ENCODE measurements at regions of chr2 and their contacts with region 1.

Region 1: DNA sequence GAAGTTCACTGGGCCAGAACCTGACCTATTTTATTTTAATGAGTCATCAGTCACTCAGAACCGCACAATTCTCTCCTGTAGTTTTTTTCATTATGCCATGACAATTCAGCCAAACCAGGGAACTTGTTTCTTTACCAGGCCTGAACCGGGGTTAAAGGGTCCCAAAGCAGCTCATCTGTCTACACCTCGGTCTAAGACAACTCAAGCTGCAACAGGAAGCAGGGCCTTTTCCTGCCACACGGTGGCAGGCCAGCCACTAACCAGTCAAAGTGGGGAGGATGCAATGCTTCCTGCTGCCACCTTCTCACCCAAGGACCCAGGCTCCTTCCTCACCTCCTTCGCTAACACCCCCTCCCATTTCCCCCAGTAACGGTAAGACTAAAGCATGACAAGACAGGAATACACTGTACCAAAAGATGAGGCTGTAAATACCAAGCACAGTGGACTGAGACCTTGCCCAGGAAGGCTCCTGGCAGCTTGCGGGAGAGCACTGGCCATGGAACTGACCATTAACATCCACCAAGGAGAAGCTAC is 56.7 kb upstream of the ACKR3 start:
- DNase-seq: peak; percentile 50 to 74 (median 67)
- ATAC-seq: peak; percentile 45 to 94 (median 85)
- H3K4me3 ChIP-seq: no peak overlapping the region
- H3K27ac ChIP-seq: no peak overlapping the region
- H3K4me1 ChIP-seq: peaks cover 0 to 12% (median 2%) of the 10 kb centered on the region in 12 donors
- H3K27me3 ChIP-seq: peaks cover 0 to 6% (median 0%) of the 10 kb centered on the region in 9 donors
- CTCF ChIP-seq: peak; percentile 77 to 92 (median 84)
- POLR2A ChIP-seq: no peak

Region 2: GRCh38 chr2:236352761-236353593 is 160.0 kb before region 1 on chr2:
- intact Hi-C with region 1: loop called in 6 of 10 experiments (anchors 5 to 10 kb)
- DNase-seq: no peak
- ATAC-seq: peak in 1 of 4 donors; percentile 49
- H3K4me3 ChIP-seq: no peak overlapping the region
- H3K27ac ChIP-seq: no peak overlapping the region
- H3K4me1 ChIP-seq: no peaks in the 10 kb centered on the region
- H3K27me3 ChIP-seq: no peaks in the 10 kb centered on the region
- CTCF ChIP-seq: peak; percentile 75 to 88 (median 83)
- POLR2A ChIP-seq: no peak

Region 3: DNA sequence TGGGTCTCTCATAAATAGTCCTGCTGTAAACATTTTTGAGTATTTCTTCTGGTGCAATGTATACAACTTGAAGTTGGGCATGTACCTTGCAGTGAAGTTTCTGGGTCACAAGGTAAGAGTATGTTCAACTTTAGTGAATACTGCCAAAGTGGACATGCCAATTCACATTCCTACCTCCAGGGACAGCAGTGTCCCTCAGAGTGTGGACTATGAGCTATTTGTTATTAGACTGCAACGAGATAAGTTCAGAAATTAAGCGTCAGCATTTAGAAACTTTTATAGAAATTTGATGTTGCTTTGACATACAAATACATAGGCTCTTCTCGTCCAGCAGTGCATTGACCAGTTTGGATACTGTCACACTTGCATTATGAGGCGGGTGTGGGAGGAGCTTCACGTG is 49.5 kb after region 1 on chr2:
- intact Hi-C with region 1: loop called in 6 of 10 experiments (anchors 5 kb)
- DNase-seq: no peak
- ATAC-seq: no peak
- H3K4me3 ChIP-seq: no peak overlapping the region
- H3K27ac ChIP-seq: no peak overlapping the region
- H3K4me1 ChIP-seq: peaks cover 0 to 19% (median 8%) of the 10 kb centered on the region in 12 donors
- H3K27me3 ChIP-seq: no peaks in the 10 kb centered on the region
- CTCF ChIP-seq: peak; percentile 37 to 75 (median 64)
- POLR2A ChIP-seq: no peak

Region 4: DNA sequence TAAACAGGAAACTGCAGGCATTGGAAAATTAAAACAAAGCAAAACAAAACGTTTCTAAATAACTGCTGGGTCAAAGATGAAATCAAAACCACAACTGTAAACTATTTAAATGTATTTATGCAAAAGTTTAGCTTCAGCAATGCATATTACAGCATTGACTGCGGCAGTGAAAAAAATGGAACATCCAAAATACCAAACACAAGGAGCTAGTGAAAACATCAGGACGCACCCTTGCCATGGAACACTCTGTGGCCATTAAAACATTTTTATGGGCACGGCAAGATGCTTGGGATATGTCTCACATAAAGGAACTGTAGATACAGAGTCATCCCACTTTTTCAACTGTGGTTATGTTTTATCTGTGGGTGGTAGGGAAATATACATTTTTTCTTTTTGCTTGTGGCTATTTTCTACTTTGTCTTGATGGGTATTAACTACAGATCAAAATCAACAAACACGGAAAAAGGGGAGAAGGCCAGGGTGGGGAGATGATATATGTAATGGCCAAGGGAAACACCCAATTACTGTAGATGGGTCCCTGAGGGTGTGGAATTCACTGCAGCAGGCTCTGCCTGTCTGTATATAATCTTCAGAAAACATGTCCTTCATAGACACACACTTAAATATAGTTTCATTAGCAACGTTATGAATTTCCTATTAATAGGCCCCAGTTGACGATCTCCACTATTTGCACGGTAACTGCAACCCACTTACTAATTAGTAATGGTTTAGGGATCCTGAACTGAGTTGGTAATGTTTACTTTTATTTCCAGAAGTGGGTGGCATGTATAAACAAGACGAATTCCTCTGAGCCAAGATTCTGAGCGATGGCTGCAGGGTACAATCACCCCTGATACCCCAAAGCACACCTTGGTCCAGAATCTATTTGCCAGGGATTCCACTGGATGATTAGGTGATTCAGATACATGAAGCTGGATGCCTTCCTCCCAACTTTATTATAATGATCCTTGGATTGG is 167.2 kb after region 1 on chr2:
- intact Hi-C with region 1: loop called in 1 of 10 experiments (anchors 10 kb)
- DNase-seq: peak in 1 of 5 donors; percentile 1
- ATAC-seq: no peak
- H3K4me3 ChIP-seq: no peak overlapping the region
- H3K27ac ChIP-seq: no peak overlapping the region
- H3K4me1 ChIP-seq: peaks cover 0 to 34% (median 15%) of the 10 kb centered on the region in 12 donors
- H3K27me3 ChIP-seq: no peaks in the 10 kb centered on the region
- CTCF ChIP-seq: no peak
- POLR2A ChIP-seq: no peak

Region 5: DNA sequence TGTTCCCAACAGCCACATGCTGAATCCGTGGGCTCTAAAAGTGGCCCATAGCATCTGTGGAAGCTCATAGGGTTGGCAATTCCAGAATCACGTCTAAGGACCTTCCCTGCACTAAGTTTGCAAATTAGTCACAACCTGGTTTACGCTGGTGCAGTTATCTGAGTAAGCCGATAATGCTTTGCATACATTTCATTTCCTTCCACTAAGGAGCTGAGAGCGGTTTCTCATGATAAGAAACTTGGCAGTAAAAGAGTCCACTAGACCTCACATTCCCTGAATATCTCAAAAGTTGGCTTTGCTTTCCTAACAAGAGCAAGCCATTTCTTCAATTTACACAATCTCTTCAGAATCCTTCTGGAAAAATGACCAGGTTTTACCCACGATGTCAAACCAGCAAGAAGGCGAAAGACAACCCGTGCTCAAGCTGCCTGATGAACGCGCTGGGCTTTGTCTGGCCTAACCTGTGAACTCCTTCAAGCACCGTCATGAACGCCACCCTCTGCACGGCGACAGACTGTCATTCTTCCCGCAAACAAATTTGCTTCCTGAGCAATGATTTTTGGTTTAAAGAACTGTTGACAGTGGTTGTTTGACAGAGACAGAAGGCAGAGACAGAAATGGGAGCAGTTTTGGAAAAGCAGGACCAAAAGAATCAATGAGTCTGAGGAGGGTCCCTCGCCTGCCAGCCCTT is 499.8 kb after region 1 on chr2:
- intact Hi-C with region 1: loop called in 1 of 10 experiments (anchors 5 kb)
- DNase-seq: no peak
- ATAC-seq: peak in 1 of 4 donors; percentile 39
- H3K4me3 ChIP-seq: no peak overlapping the region
- H3K27ac ChIP-seq: no peak overlapping the region
- H3K4me1 ChIP-seq: peaks cover 0 to 10% (median 0%) of the 10 kb centered on the region in 12 donors
- H3K27me3 ChIP-seq: no peaks in the 10 kb centered on the region
- CTCF ChIP-seq: no peak
- POLR2A ChIP-seq: no peak

Region 6: DNA sequence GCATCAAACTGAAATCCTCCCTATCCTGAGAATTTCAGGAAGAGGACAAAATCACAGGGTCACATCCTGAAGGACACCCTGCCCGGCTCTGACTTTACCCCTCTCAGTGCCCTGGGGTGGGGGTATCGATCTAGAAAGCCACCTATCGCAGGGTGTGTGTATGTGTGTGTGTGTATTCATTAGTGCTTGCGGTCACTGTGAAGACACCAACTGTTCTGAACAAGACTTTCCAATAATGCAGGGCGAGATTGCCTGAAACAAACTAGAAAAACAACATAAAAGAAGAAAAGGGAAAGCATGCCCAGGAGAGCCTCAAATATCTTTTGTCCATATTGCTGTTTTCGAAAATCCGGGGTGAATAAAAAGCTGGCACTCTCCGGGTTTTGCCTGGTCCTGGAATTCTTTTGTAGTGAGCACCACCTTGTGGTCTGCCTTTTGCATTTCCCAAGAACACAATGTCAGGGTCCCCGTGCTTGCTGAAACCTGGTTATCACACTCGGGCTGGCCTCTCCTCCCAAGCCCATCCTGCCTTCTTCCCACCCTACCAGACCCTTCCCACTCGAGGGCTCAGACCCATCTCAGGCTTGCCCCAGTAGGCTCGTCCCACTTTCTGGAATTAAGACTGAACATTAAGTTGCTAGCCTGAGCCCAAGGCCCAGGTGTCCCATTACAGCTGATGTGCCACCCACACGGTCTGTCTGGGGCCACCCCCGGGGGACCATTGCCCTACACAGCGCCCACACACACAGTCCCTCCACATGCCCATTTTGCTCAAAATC is 547.8 kb after region 1 on chr2:
- intact Hi-C with region 1: loop called in 5 of 10 experiments (anchors 2 to 10 kb)
- DNase-seq: peak in 3 of 5 donors; percentile 38 to 54 (median 51)
- ATAC-seq: peak; percentile 49 to 81 (median 72)
- H3K4me3 ChIP-seq: no peak overlapping the region
- H3K27ac ChIP-seq: no peak overlapping the region
- H3K4me1 ChIP-seq: peaks cover 0 to 6% (median 0%) of the 10 kb centered on the region in 12 donors
- H3K27me3 ChIP-seq: no peaks in the 10 kb centered on the region
- CTCF ChIP-seq: peak; percentile 34 to 82 (median 70)
- POLR2A ChIP-seq: no peak

Measured in heart left ventricle (tissue), 16 donors.